Heart right ventricle (tissue), 16 donors: ENCODE measurements at regions of chr11 and their contacts with region 1.

Region 1: GRCh38 chr11:128940603-128941002 is 2.1 kb downstream of the TP53AIP1 start:
- DNase-seq: no peak
- ATAC-seq: no peak
- H3K4me3 ChIP-seq: no peak overlapping the region
- H3K27ac ChIP-seq: no peak overlapping the region
- H3K4me1 ChIP-seq: no peaks in the 10 kb centered on the region
- H3K27me3 ChIP-seq: peaks cover 0 to 14% (median 0%) of the 10 kb centered on the region in 7 donors
- CTCF ChIP-seq: no peak

Region 2: DNA sequence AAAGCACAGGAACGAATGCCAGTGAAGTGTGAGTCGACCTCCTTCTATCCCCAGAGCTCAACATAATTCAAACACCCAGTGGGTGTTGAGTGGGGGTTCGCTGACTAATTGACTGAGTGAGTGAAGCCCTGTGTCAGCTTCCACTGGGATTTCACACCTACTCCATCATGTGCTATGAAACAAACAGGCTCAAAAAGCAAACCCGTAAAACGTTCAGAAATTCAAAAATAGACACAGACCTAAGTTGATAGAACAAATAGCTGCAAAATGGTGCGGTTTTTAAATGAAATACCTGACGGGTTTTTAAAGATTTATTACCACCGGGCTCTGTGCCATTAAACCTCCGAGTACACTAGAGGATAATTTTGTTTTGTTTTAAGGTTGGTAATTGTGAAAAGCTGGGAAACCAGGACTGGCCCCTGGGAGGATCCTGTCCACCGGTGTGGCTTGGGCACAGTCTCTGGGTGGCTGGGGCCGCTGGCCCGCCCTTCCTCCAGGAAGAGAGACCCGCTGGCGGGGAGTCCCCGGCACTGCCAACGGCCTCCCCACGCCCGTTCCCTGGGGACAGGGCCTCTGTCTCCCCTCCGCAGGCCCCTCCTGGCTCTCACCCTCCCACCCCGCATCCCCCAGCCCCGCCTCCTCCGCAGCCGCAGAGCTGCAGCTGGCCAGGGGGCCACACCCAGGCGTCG is 35.8 kb before region 1 on chr11:
- intact Hi-C with region 1: loop called in 1 of 10 experiments (anchors 1 kb)
- DNase-seq: peak in 1 of 2 donors; percentile 54
- ATAC-seq: peak; percentile 44 to 76 (median 56)
- H3K4me3 ChIP-seq: peak overlapping the region; percentile 46 to 79 (median 61)
- H3K27ac ChIP-seq: peak overlapping the region in 9 of 10 donors; percentile 58 to 86 (median 69)
- H3K4me1 ChIP-seq: peaks cover 7 to 67% (median 43%) of the 10 kb centered on the region in 9 donors
- H3K27me3 ChIP-seq: peaks cover 0 to 5% (median 0%) of the 10 kb centered on the region in 7 donors
- CTCF ChIP-seq: no peak